ENCODE measurements at regions of chr18 and their contacts with region 1.

Region 1: GRCh38 chr18:36872329-36872728 is 43.4 kb downstream of the KIAA1328 start:
- DNase-seq: no peak
- ATAC-seq: no peak
- H3K4me3 ChIP-seq: no peak overlapping the region
- H3K27ac ChIP-seq: no peak overlapping the region
- H3K4me1 ChIP-seq: no peaks in the 10 kb centered on the region
- H3K27me3 ChIP-seq: no peaks in the 10 kb centered on the region
- CTCF ChIP-seq: no peak
- POLR2A ChIP-seq: no peak

Region 2: GRCh38 chr18:36321658-36322407 is 550.5 kb before region 1 on chr18:
- in situ Hi-C with region 1: no loop called
- intact Hi-C with region 1: no loop called
- DNase-seq: no peak
- ATAC-seq: no peak
- H3K4me3 ChIP-seq: no peak overlapping the region
- H3K27ac ChIP-seq: no peak overlapping the region
- H3K4me1 ChIP-seq: peaks cover 5 to 13% of the 10 kb centered on the region in 2 donors
- H3K27me3 ChIP-seq: no peaks in the 10 kb centered on the region
- CTCF ChIP-seq: no peak
- POLR2A ChIP-seq: no peak

Region 3: DNA sequence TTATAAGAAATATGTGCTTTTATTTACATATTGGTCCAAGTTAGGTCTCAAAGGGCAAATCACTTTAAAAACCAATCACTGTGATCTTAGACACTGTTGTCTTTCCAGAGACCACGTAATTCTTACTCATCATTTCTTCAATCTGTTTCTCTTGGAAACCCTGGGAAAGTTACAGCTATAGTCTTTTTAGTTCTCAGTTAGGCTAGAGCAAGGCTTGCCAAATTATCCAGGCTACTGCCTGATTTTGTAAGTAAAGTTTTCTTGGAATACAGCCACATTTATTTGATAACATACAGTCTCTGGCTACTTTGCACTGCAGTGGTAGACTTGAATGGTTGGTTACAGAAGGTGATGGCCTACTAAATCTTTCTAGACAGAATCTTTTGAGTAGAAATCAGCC is 62.6 kb after region 1 on chr18:
- in situ Hi-C with region 1: no loop called
- intact Hi-C with region 1: loop called (anchors 10 kb)
- DNase-seq: no peak
- ATAC-seq: no peak
- H3K4me3 ChIP-seq: no peak overlapping the region
- H3K27ac ChIP-seq: no peak overlapping the region
- H3K4me1 ChIP-seq: no peaks in the 10 kb centered on the region
- H3K27me3 ChIP-seq: no peaks in the 10 kb centered on the region
- CTCF ChIP-seq: no peak
- POLR2A ChIP-seq: no peak